ENCODE measurements at regions of chr10 and their contacts with region 1.

Region 1: GRCh38 chr10:71694567-71694968 is 25.0 kb downstream of the C10orf105 start:
- DNase-seq: peak; percentile 87 to 92 (median 91)
- H3K4me3 ChIP-seq: peak overlapping the region; percentile 0 to 58 (median 13)
- H3K4me3 Mint-ChIP-seq: peak overlapping the region; percentile 72 to 86
- H3K27ac ChIP-seq: peak overlapping the region; percentile 92 to 96
- H3K27ac Mint-ChIP-seq: peak overlapping the region; percentile 90 to 97 (median 94)
- H3K4me1 ChIP-seq: peaks cover 75 to 80% of the 10 kb centered on the region in 2 donors
- H3K4me1 Mint-ChIP-seq: peaks cover 72% of the 10 kb centered on the region
- H3K27me3 ChIP-seq: no peaks in the 10 kb centered on the region
- H3K27me3 Mint-ChIP-seq: peaks cover 0 to 5% (median 0%) of the 10 kb centered on the region in 3 donors
- CTCF ChIP-seq: no peak

Region 2: DNA sequence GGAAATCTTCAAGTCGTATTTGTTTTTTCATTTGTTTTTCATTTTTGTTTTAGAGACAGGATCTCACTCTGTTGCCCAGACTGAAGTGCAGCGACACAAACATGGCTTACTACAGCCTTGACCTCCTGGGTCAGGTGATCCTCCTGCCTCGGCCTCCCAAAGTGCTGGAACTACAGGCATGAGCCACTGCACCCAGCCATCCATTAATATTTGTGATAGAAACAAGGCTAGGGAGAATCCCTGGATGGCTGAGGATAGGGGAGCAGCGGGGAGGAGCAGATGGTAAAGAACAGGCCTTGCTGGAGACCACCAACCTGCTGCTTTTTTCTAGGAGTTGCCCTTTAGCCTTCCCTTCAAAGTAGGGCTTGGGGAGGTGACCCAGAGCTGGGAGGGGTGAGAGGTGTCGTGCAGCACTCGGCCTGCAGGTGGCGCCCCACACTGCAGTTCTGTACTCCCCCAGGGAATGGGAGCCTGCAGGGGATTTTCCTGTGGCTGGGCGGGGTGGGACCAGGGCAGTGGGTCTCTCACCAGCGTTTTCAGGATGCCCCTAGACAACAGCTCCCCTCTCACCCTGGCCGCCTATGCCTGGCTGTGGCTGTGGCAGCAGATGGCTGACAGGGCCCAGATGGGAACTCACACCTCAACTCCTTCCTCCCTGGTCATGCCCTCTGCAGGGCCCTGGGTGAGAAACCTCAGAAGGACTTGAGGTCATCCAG is 310.4 kb before region 1 on chr10:
- intact Hi-C with region 1: loop called in 1 of 2 experiments (anchors 5 kb)
- DNase-seq: peak; percentile 61 to 77 (median 73)
- H3K4me3 ChIP-seq: no peak overlapping the region
- H3K4me3 Mint-ChIP-seq: no peak overlapping the region
- H3K27ac ChIP-seq: no peak overlapping the region
- H3K27ac Mint-ChIP-seq: peak overlapping the region in 4 of 7 donors; percentile 3 to 93 (median 61)
- H3K4me1 ChIP-seq: peaks cover 38 to 41% of the 10 kb centered on the region in 2 donors
- H3K4me1 Mint-ChIP-seq: peaks cover 24% of the 10 kb centered on the region
- H3K27me3 ChIP-seq: no peaks in the 10 kb centered on the region
- H3K27me3 Mint-ChIP-seq: peaks cover 0 to 4% (median 2%) of the 10 kb centered on the region in 3 donors
- CTCF ChIP-seq: peak; percentile 94

Region 3: GRCh38 chr10:71638064-71638821 is 56.3 kb before region 1 on chr10:
- intact Hi-C with region 1: loop called in 1 of 2 experiments (anchors 5 kb)
- DNase-seq: peak; percentile 97 to 99 (median 97)
- H3K4me3 ChIP-seq: peak overlapping the region; percentile 24 to 73 (median 50)
- H3K4me3 Mint-ChIP-seq: peak overlapping the region; percentile 72 to 88
- H3K27ac ChIP-seq: peak overlapping the region; percentile 85 to 90
- H3K27ac Mint-ChIP-seq: peak overlapping the region; percentile 88 to 98 (median 96)
- H3K4me1 ChIP-seq: peaks cover 44 to 65% of the 10 kb centered on the region in 2 donors
- H3K4me1 Mint-ChIP-seq: peaks cover 67% of the 10 kb centered on the region
- H3K27me3 ChIP-seq: no peaks in the 10 kb centered on the region
- H3K27me3 Mint-ChIP-seq: peaks cover 1 to 3% (median 2%) of the 10 kb centered on the region in 3 donors
- CTCF ChIP-seq: no peak

Measured in CD14-positive monocyte (primary cell).